A673 (cell line): ENCODE measurements at regions of chr14 and their contacts with region 1.

Region 1: GRCh38 chr14:35797796-35798195 is 11.3 kb downstream of the RALGAPA1 start:
- DNase-seq: no peak
- H3K4me3 ChIP-seq: no peak overlapping the region
- H3K27ac ChIP-seq: no peak overlapping the region
- H3K4me1 ChIP-seq: no peaks in the 10 kb centered on the region
- H3K27me3 ChIP-seq: no peaks in the 10 kb centered on the region
- CTCF ChIP-seq: no peak

Region 2: GRCh38 chr14:35653045-35653444 is 144.8 kb before region 1 on chr14:
- CTCF ChIA-PET with region 1: no interaction called
- POLR2A ChIA-PET with region 1: no interaction called
- intact Hi-C with region 1: no loop called
- DNase-seq: no peak
- H3K4me3 ChIP-seq: no peak overlapping the region
- H3K27ac ChIP-seq: no peak overlapping the region
- H3K4me1 ChIP-seq: no peaks in the 10 kb centered on the region
- H3K27me3 ChIP-seq: no peaks in the 10 kb centered on the region
- CTCF ChIP-seq: no peak

Region 3: GRCh38 chr14:35814371-35815005 is 16.7 kb after region 1 on chr14:
- CTCF ChIA-PET with region 1: no interaction called
- POLR2A ChIA-PET with region 1: interaction called, 10 read pairs
- intact Hi-C with region 1: no loop called
- DNase-seq: peak; percentile 83
- H3K4me3 ChIP-seq: no peak overlapping the region
- H3K27ac ChIP-seq: no peak overlapping the region
- H3K4me1 ChIP-seq: no peaks in the 10 kb centered on the region
- H3K27me3 ChIP-seq: no peaks in the 10 kb centered on the region
- CTCF ChIP-seq: peak; percentile 80

Region 4: DNA sequence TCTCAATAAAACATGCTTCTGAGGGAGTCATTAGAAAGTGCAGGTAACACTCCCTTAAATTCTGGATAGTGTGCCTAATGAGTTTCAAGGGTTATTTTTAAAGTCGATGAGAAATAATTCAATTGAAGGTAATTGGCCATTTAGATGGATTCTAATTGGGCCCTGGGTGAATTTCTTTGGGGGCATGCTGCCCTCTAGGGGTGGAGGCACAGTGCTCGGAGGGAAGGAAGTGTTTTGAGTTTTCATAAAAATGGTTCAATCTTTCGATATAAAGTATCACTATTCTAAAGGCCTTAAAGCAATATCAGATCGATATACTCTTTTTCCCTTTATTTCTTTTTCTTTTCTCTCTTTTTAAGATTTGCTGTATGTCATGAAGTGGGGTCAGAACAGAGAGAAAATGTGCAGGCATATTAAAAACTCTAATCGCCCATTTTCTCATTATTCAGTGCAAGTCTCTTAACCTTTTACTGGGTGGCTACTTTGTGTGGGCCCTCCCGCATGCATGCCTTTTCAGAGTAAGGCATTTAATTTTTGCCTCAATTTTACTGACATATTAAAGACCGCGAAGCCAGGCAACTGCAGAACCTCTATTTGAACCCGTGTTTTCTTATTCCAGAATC is 759.1 kb after region 1 on chr14:
- CTCF ChIA-PET with region 1: no interaction called
- POLR2A ChIA-PET with region 1: no interaction called
- intact Hi-C with region 1: no loop called
- DNase-seq: peak; percentile 41
- H3K4me3 ChIP-seq: no peak overlapping the region
- H3K27ac ChIP-seq: no peak overlapping the region
- H3K4me1 ChIP-seq: no peaks in the 10 kb centered on the region
- H3K27me3 ChIP-seq: peaks cover 10% of the 10 kb centered on the region
- CTCF ChIP-seq: peak; percentile 90